ENCODE measurements at regions of chr18 and their contacts with region 1.

Region 1: DNA sequence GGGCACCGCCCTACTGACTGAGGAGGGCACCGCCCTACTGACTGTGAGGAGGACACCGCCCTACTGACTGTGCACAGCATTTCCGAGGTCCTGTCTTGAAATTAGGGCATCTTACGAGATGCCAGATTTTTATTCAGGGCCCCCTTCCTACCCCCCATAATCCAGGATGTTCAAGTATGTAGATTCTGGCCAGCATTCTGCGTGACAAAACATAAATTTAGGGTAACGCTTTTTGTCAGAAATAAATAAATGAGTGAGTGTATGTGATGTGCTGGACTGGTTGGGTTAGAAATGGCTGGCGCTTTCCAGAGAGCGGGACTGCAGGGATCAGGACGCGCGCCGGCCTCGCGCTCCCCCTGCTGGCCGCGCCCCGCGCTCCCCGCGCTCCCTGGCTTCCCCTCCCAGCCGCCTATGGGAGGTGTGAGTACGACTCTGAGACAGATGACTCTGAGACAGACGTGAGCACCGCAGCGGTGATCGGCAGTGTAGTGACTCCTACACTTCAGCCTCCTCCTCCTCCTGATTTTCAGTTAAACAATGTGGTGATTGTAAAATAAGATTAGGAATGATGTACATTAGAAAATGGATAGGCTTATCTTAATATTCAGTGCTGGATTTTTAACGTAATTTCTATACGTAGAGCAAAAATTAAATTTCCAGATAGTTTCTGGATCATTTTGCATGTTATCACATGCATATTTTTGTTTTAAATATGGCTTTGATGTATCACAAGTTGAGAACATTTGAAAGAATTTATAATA is 149.2 kb upstream of the NFATC1 start:
- DNase-seq: peak; percentile 73
- ATAC-seq: peak; percentile 100
- H3K4me3 ChIP-seq: no peak overlapping the region
- H3K27ac ChIP-seq: no peak overlapping the region
- H3K4me1 ChIP-seq: no peaks in the 10 kb centered on the region
- H3K27me3 ChIP-seq: no peaks in the 10 kb centered on the region
- CTCF ChIP-seq: peak; percentile 95
- POLR2A ChIP-seq: no peak
- RAD21 ChIP-seq: peak; percentile 87

Region 2: DNA sequence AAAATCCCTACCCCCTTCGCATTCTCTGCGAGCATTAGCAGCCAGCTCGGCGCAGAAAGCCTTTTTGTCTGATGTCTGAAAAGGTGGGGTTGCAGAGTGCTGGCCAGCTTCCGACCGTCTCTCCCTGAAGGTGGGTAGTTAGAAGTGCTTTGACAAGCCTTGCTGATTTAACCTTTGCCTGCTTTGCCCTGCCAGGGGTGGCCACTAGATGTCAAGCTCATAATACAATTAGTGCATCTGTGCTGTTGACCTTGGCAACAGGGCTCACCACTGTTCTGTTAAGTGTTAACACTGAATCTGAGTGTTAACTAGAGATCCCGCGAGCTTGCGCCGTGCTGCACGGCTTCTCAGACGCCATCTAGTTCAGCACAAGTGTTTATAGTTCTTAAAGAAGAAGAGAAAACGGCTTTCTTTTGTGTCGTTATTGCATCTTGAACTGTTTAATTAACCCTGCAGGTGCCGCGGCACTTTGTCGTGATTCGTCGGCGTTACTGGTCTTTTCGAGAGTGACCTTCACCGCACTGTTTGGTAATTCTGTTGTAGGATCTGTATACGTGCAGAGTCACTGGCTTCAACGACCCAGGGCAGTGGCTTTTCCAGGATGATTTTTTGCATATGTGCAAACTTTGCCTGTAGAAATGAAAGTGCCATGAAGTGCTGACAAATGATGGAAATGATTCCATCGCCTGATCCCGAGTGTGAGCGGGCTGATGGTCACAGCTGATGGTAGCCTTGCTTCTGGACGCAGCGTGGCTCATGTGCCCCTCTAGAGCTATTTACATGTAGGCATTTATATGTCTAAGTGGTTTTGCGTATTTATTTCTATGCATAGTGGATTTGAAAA is 261.4 kb before region 1 on chr18:
- CTCF ChIA-PET with region 1: no interaction called
- POLR2A ChIA-PET with region 1: no interaction called
- dilution Hi-C with region 1: no loop called
- in situ Hi-C with region 1: no loop called
- intact Hi-C with region 1: loop called (anchors 5 kb)
- DNase-seq: no peak
- ATAC-seq: peak; percentile 21; the same call in 1 of the 2 replicates
- H3K4me3 ChIP-seq: no peak overlapping the region
- H3K27ac ChIP-seq: no peak overlapping the region
- H3K4me1 ChIP-seq: no peaks in the 10 kb centered on the region
- H3K27me3 ChIP-seq: peaks cover 36% of the 10 kb centered on the region
- CTCF ChIP-seq: 0 out of 2 replicates have a peak, but pooled peaks have one; percentile 5
- POLR2A ChIP-seq: no peak
- RAD21 ChIP-seq: no peak

Region 3: DNA sequence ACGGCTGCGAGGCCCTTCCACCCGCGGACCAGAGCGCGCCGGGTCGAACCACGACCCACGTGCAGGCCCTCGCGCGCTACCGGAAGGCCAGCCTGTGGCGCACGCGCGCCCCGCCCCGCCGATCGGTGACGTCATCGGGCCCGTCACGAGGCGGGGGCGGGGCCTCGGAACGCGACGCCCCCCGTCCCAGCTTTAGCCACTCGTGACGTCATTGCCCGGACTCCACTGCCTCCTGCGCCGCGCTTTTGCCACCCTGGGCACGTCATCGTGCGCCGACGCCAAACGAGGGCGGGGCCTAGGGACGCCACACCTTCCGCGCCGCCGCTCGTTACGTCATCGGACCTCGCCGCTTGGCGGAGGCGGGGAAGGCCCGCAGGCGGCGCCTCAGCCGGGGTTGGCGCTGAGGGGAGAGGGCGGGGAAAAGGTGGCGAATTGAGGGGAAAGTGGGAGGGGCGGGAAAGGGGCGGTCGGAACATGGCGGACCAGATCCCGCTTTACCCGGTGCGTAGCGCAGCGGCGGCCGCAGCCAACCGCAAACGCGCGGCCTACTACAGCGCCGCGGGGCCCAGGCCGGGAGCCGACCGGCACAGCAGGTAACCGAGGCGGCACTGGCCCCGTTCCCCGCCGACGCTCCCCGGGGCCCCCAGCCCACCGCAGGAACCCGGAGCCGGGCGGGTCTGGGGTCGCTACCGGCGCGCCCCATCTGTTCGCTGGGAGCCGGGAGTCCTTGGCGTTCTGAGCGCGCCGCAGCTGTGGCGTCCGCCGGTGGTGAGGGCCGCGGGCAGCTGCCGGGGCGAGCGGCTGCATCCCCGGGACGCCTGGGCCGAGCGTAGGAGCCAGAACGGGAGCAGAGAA is 177.4 kb before region 1 on chr18 and contains the start of gene ATP9B:
- CTCF ChIA-PET with region 1: no interaction called
- POLR2A ChIA-PET with region 1: no interaction called
- dilution Hi-C with region 1: no loop called
- in situ Hi-C with region 1: no loop called
- intact Hi-C with region 1: loop called (anchors 1 kb)
- DNase-seq: peak; percentile 97
- ATAC-seq: peak; percentile 95
- H3K4me3 ChIP-seq: peak within 1 kb of the TSS; percentile 94
- H3K27ac ChIP-seq: peak within 1 kb of the TSS; percentile 54
- H3K4me1 ChIP-seq: no peaks in the 10 kb centered on the region; the same call in 1 of the 2 replicates
- H3K27me3 ChIP-seq: no peaks in the 10 kb centered on the region
- CTCF ChIP-seq: no peak; the same call in 1 of the 2 replicates
- POLR2A ChIP-seq: peak; percentile 82
- RAD21 ChIP-seq: no peak
- total RNA-seq, gene ATP9B: 11.5 and 14.4 TPM in 2 replicates

Region 4: GRCh38 chr18:79532328-79533007 is 285.9 kb after region 1 on chr18:
- CTCF ChIA-PET with region 1: no interaction called
- POLR2A ChIA-PET with region 1: no interaction called
- dilution Hi-C with region 1: no loop called
- in situ Hi-C with region 1: no loop called
- intact Hi-C with region 1: no loop called
- DNase-seq: peak; percentile 53
- ATAC-seq: peak; percentile 41; the same call in 1 of the 2 replicates
- H3K4me3 ChIP-seq: no peak overlapping the region
- H3K27ac ChIP-seq: no peak overlapping the region
- H3K4me1 ChIP-seq: no peaks in the 10 kb centered on the region
- H3K27me3 ChIP-seq: peaks cover 28% of the 10 kb centered on the region
- CTCF ChIP-seq: no peak
- POLR2A ChIP-seq: no peak
- RAD21 ChIP-seq: no peak

Measured in IMR-90 (cell line).